Activated naive CD4-positive, alpha-beta T cell treated with anti-CD3 and anti-CD28 coated beads for 36 hours (primary cell): ENCODE measurements at regions of chr19 and their contacts with region 1.

Region 1: DNA sequence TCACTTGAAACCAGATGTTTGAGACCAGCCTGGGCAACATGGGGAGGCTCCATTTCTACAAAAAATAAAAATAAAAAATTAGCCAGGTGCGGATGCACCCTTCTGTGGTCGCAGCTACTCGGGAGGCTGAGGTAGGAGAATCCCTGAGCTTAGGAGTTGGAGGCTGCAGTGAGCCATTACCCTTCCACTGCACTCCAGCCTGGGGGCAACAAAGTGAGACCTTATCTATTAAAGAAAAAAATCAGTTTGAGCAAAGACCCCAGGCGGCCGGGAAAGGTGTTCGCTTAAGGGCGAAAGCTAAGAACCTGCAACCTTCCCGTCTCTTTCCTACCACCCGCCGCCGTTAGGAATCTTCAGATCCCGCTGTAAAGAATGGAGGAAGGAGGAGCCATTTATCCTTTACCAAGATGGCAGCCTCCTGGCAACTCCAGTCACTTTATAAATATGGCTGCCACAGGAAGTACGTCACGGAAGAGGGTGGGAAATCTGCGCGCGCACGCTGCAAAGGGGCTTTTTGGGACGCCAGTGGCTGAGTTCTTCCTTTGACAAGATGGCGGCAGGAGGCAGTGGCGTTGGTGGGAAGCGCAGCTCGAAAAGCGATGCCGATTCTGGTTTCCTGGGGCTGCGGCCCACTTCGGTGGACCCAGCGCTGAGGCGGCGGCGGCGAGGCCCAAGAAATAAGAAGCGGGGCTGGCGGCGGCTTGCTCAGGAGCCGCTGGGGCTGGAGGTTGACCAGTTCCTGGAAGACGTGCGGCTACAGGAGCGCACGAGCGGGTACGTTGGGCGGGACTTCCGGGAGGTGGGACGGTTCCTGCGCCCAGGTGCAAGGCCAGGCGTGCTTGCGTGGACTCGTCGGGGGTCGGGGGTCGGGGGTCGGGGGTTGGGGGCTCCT is at the start of gene NOP53:
- DNase-seq: peak; percentile 98
- H3K4me3 Mint-ChIP-seq: peak within 1 kb of the TSS; percentile 99
- H3K27ac Mint-ChIP-seq: peak within 1 kb of the TSS; percentile 100
- H3K4me1 Mint-ChIP-seq: peaks cover 56% of the 10 kb centered on the region
- H3K27me3 Mint-ChIP-seq: no peaks in the 10 kb centered on the region
- total RNA-seq, gene NOP53: 274 to 300 TPM

Region 2: DNA sequence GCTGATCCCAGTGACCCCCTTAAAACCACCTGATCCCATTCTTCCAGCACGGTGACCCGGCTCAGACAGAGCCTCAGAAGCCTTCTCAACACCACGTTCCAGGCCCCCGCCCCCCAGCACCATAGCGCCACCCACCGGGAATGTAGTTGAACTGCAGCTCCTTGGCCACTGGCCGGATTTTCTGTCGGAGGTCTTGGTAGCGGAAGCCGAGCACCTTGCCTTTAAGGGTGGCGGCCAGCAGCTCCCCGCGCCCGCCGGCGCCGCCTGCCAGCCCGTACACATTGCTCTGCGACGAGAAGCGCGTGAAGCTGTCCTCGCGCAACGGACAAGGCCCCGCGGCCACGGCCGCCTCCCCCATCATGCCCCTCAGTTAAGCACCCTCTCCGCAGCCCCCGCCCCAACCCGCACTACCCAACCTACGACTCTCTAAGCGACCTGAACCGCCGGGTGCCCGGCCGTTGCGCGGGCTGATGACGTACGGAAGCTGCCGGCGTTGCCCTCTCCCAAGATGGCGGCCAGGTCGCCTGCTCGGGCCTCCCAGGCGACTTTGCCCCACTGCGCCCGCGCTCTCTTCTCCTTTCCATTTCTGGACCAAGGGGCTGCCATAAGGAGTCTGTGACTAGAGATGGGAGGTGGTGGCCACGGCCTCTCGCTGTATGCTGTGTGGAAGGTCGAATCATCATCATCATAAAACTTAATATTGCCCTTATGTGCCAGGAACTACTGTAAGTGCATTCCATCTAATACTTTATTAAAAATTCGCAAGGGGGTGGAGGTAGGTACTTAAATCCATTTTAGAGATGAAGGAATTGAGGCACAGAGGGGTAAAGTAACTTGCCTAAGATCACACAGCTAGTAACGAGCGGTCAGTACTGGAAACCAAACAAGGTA is 261.2 kb before region 1 on chr19 and contains the start of gene KPTN:
- CTCF ChIA-PET with region 1: interaction called, 7 read pairs
- intact Hi-C with region 1: loop called (anchors 1 kb)
- DNase-seq: peak; percentile 93
- H3K4me3 Mint-ChIP-seq: peak within 1 kb of the TSS; percentile 99
- H3K27ac Mint-ChIP-seq: peak within 1 kb of the TSS; percentile 98
- H3K4me1 Mint-ChIP-seq: peaks cover 31% of the 10 kb centered on the region
- H3K27me3 Mint-ChIP-seq: no peaks in the 10 kb centered on the region
- total RNA-seq, gene KPTN: 14.2 to 15.5 TPM

Region 3: GRCh38 chr19:47707135-47707925 is 37.9 kb before region 1 on chr19:
- CTCF ChIA-PET with region 1: interaction called, 103 read pairs
- intact Hi-C with region 1: no loop called
- DNase-seq: peak; percentile 89
- H3K4me3 Mint-ChIP-seq: no peak overlapping the region
- H3K27ac Mint-ChIP-seq: no peak overlapping the region
- H3K4me1 Mint-ChIP-seq: peaks cover 4% of the 10 kb centered on the region
- H3K27me3 Mint-ChIP-seq: peaks cover 6% of the 10 kb centered on the region

Region 4: GRCh38 chr19:47722749-47723140 is 22.5 kb before region 1 on chr19:
- CTCF ChIA-PET with region 1: interaction called, 9 read pairs
- intact Hi-C with region 1: loop called (anchors 1 kb)
- DNase-seq: no peak
- H3K4me3 Mint-ChIP-seq: no peak overlapping the region
- H3K27ac Mint-ChIP-seq: no peak overlapping the region
- H3K4me1 Mint-ChIP-seq: peaks cover 2% of the 10 kb centered on the region
- H3K27me3 Mint-ChIP-seq: peaks cover 5% of the 10 kb centered on the region

Region 5: DNA sequence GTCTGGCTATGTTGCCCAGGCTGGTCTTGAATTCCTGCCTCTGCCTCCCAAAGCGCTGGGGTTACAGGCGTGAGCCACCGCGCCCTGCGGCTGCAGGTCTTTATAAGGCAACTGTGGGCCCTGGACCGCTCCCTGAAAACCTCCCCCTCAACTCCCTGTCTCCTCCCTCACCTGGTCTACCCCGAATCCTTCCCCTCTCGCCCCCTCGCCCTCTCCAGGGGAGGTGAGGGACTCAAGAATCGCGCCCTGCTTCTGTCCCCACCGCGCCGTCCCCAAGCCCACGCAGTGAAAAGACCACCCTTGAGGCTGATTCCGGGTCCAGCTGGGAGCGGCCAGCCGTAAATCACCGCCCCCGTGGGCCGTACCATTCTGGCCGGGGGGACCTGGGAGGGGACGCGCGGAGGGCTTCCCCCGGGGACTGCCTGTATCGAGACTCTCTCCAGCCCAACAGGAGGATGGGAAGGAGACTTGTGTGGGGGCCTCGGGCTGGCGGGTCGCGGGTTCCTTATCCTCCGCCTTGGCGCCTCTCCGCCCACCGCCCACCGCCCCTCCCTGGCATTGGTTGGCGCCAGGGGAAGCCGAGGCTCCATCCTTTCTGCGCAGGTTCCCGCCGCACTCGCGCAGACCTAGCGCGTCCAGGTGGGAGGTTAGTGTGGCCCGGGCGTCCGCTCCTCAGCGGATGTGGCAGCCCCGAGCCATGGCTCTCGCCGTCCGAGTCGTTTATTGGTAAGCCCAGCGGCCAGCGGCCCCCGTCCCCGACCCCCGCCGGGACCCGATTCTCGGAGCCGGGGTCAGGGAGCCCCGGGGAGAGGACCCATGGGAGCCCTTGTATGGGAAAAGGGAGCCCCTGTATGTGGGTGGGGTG is 33.1 kb after region 1 on chr19 and contains the start of gene SELENOW:
- CTCF ChIA-PET with region 1: no interaction called
- intact Hi-C with region 1: loop called (anchors 1 kb)
- DNase-seq: peak; percentile 81
- H3K4me3 Mint-ChIP-seq: peak within 1 kb of the TSS; percentile 92
- H3K27ac Mint-ChIP-seq: peak within 1 kb of the TSS; percentile 92
- H3K4me1 Mint-ChIP-seq: peaks cover 23% of the 10 kb centered on the region
- H3K27me3 Mint-ChIP-seq: no peaks in the 10 kb centered on the region
- total RNA-seq, gene SELENOW: 146 to 149 TPM

Region 6: DNA sequence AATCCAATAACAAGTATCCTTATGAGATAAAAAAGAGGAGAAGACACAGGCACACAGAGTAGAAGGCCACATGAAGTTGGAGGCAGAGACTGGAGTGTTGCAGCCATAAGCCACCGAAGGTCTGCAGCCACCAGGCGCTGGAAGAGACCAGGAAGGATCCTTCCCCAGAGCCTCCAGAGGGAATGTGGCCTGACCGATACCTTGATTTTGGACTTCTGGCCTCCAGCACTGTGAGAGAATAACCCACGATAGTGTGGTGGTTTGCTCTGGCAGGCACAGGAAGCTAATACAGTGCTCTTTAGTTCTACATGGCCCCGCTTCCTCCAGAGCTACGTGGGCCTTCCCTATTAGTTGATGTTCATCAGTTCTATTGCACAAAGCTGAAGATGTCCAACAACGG is 156.1 kb after region 1 on chr19:
- CTCF ChIA-PET with region 1: no interaction called
- intact Hi-C with region 1: no loop called
- DNase-seq: no peak
- H3K4me3 Mint-ChIP-seq: no peak overlapping the region
- H3K27ac Mint-ChIP-seq: no peak overlapping the region
- H3K4me1 Mint-ChIP-seq: no peaks in the 10 kb centered on the region
- H3K27me3 Mint-ChIP-seq: peaks cover 4% of the 10 kb centered on the region

Region 7: GRCh38 chr19:48206397-48207093 is 461.3 kb after region 1 on chr19:
- CTCF ChIA-PET with region 1: no interaction called
- intact Hi-C with region 1: no loop called
- DNase-seq: no peak
- H3K4me3 Mint-ChIP-seq: no peak overlapping the region
- H3K27ac Mint-ChIP-seq: peak overlapping the region; percentile 71
- H3K4me1 Mint-ChIP-seq: peaks cover 33% of the 10 kb centered on the region
- H3K27me3 Mint-ChIP-seq: no peaks in the 10 kb centered on the region

Region 8: GRCh38 chr19:48230555-48231129 is 485.4 kb after region 1 on chr19:
- CTCF ChIA-PET with region 1: no interaction called
- intact Hi-C with region 1: no loop called
- DNase-seq: peak; percentile 34
- H3K4me3 Mint-ChIP-seq: no peak overlapping the region
- H3K27ac Mint-ChIP-seq: peak overlapping the region; percentile 10
- H3K4me1 Mint-ChIP-seq: peaks cover 3% of the 10 kb centered on the region
- H3K27me3 Mint-ChIP-seq: no peaks in the 10 kb centered on the region